Mammary epithelial cell (primary cell): ENCODE measurements at regions of chr18 and their contacts with region 1.

Region 1: GRCh38 chr18:36402765-36403396 is 105.4 kb downstream of the FHOD3 start:
- DNase-seq: no peak
- H3K4me3 ChIP-seq: no peak overlapping the region
- H3K27ac ChIP-seq: no peak overlapping the region
- H3K4me1 ChIP-seq: peaks cover 30% of the 10 kb centered on the region
- H3K27me3 ChIP-seq: no peaks in the 10 kb centered on the region
- CTCF ChIP-seq: no peak

Region 2: GRCh38 chr18:36302676-36303075 is 100.2 kb before region 1 on chr18:
- CTCF ChIA-PET with region 1: no interaction called
- dilution Hi-C with region 1: loop called (anchors 5 kb)
- in situ Hi-C with region 1: no loop called
- intact Hi-C with region 1: loop called (anchors 5 kb)
- DNase-seq: no peak
- H3K4me3 ChIP-seq: no peak overlapping the region
- H3K27ac ChIP-seq: no peak overlapping the region
- H3K4me1 ChIP-seq: peaks cover 42% of the 10 kb centered on the region
- H3K27me3 ChIP-seq: no peaks in the 10 kb centered on the region
- CTCF ChIP-seq: no peak

Region 3: GRCh38 chr18:36451454-36452251 is 48.8 kb after region 1 on chr18:
- CTCF ChIA-PET with region 1: no interaction called
- dilution Hi-C with region 1: loop called (anchors 5 kb)
- in situ Hi-C with region 1: no loop called
- intact Hi-C with region 1: no loop called
- DNase-seq: peak; percentile 39
- H3K4me3 ChIP-seq: no peak overlapping the region
- H3K27ac ChIP-seq: no peak overlapping the region
- H3K4me1 ChIP-seq: peaks cover 31% of the 10 kb centered on the region
- H3K27me3 ChIP-seq: no peaks in the 10 kb centered on the region
- CTCF ChIP-seq: no peak

Region 4: DNA sequence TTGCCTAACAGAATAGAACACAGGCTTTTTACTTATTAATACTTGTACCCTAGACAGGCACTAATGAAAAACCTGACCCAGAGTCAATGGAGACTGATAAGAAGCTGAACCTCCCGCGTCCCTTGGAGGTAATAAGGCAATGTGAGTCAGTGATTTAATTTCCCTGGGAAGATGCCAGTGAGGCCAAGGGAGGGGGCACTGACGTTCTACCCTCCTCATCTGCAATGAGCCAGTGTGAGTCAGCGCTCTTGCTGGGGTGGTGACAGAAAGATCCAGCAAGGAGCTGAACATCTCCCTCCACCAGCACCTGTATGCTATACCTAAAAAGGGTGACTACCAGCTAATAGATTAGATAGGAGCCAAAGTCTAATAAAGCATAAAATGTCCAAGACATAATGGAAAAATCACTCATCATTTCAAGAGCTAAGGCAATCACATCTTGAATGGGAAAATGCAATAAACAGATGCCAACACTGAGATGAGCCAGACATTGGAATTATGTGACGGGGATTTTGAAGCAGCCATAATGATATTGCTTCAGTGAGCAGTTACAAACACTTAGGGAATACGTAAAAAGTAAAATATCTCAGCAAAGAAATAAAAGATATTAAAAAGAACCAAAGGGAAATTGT is 309.0 kb after region 1 on chr18:
- CTCF ChIA-PET with region 1: no interaction called
- dilution Hi-C with region 1: no loop called
- in situ Hi-C with region 1: no loop called
- intact Hi-C with region 1: no loop called
- DNase-seq: peak; percentile 74
- H3K4me3 ChIP-seq: no peak overlapping the region
- H3K27ac ChIP-seq: no peak overlapping the region
- H3K4me1 ChIP-seq: peaks cover 7% of the 10 kb centered on the region
- H3K27me3 ChIP-seq: no peaks in the 10 kb centered on the region
- CTCF ChIP-seq: no peak